ENCODE measurements at regions of chr3 and their contacts with region 1.

Region 1: DNA sequence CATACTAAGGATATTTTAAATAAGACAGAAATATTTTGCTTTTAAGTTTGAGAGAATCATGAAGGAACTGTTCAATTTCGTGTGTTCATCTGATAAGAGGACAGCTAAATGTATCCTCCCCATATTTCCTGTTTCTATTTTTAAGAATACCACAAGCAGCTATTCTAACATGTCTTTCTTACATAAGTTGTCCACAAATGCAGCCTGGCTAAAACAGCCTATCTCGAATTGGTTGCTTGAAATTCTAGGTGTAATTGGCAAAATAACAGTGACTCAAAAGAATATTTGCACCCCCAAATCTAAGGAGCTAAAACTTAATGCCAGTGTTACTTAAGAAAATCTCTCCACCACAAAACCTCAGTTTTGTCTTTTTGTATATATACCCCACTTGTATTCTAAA is 35.0 kb downstream of the BTLA start:
- DNase-seq: no peak
- H3K4me3 Mint-ChIP-seq: peak overlapping the region; percentile 22
- H3K27ac Mint-ChIP-seq: peak overlapping the region; percentile 76
- H3K4me1 Mint-ChIP-seq: peaks cover 80% of the 10 kb centered on the region
- H3K27me3 Mint-ChIP-seq: no peaks in the 10 kb centered on the region

Region 2: DNA sequence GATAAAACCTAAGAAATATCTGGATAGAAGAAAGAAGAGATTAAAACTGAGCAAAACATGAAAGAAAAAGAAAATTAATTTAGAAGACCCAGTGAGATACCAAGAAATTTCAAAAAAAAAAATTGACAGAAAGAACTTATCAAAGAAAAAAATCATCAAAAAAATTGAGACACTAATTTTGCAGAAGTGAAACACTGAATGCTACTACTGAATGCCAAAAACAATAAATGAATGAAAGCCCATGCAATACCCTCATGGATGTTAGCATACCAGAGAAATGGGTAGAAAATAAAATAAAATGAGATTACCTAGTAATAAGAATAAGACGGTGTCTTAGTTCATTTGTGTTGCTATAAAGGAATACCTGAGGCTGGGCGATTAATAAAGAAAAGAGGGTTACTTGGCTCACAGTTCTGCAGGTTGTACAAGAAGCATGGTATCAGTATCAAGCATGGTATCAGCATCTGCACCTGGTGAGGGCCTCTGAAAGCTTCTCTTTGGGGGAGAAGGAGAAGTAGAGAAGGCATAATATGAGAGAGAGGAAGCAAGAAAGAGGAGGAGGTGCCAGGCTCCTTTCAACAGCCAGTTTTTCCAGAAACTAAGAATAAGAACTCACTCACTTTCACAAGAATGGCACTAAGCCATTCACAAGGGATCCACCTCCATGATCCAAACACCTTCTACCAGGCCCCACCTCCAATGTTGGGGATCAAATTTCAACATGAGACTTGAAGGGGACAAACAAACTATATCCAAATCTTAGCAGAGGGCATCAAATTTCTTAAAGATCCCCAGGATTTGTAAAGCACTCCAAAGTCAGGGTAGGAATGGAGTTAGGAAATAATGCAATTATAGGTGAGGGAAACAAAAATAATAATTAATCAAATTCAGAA is 38.2 kb before region 1 on chr3:
- CTCF ChIA-PET with region 1: no interaction called
- POLR2A ChIA-PET with region 1: no interaction called
- DNase-seq: no peak
- H3K4me3 Mint-ChIP-seq: no peak overlapping the region
- H3K27ac Mint-ChIP-seq: no peak overlapping the region
- H3K4me1 Mint-ChIP-seq: no peaks in the 10 kb centered on the region
- H3K27me3 Mint-ChIP-seq: peaks cover 3% of the 10 kb centered on the region

Region 3: DNA sequence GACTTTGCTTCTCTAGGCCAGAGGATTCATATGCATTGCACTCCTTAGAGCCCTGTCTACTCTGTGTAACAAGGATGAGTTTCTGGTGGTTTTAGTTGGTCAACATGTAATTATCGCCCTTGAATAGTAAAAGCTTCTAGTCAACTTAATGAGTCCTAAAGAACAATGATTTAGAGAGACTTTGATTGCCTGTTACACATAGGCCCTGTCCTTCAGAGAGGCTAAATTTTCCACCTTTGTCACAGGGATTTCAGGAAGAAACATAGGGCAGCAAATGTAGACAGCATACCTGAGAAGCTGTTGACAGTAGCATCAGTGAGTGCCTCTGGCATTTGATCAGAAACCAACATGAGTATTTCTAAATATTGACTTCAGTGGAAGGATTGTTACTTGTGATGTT is 27.9 kb after region 1 on chr3:
- CTCF ChIA-PET with region 1: no interaction called
- POLR2A ChIA-PET with region 1: interaction called, 26 read pairs
- DNase-seq: no peak
- H3K4me3 Mint-ChIP-seq: no peak overlapping the region
- H3K27ac Mint-ChIP-seq: no peak overlapping the region
- H3K4me1 Mint-ChIP-seq: peaks cover 81% of the 10 kb centered on the region
- H3K27me3 Mint-ChIP-seq: no peaks in the 10 kb centered on the region